ENCODE measurements at regions of chr11 and their contacts with region 1.

Region 1: DNA sequence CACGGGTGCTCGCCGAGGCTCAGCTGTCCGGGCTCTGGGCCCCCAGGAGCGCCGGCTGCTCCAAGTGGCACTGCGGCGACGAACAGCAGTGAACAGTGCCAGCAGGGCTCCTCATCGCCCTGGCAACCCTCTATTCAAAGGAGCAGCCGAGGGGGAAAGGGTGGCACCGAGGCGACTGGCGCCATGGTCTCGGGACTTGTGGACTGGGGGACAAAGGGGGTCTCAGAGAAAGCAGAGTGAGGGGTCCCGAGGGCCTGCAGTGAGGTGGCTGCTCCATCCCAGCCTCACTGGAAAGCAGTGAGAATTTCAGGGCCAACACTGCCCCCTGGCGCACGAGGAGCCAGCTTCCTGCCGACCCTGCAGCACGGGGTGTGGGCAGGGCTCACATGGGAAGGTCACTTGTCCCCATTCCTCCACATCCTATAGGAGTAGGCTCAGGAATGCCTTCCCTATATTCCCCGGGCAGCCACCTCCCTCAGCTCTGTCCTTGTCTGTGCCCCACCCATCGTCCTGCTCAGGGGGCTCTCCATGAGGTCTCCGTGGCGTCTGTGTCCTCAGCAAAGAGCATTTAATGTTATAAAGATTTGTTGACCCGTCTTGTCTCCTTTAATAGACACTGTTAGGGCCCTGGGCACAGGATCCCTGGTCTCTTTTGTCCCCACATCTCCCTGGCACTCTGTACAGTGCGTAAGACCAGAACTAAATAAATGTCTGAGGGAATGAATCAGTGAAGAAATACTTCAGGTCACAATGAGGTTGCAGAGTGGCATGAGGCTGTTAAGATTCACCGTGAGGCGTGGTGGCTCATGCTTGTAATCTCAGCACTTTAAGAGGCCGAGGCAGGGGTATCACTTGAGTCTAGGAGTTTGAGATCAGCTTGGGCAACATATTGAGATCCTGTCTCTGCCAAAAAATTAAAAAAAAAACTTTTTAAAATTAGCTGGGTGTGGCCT is 26.4 kb downstream of the LRFN4 start:
- DNase-seq: peak; percentile 70
- H3K4me3 ChIP-seq: peak overlapping the region in 1 of 2 donors; percentile 5
- H3K27ac ChIP-seq: peak overlapping the region; percentile 63 to 80
- H3K4me1 ChIP-seq: peaks cover 37% of the 10 kb centered on the region
- H3K27me3 ChIP-seq: no peaks in the 10 kb centered on the region
- CTCF ChIP-seq: peak; percentile 32 to 83 (median 66)
- POLR2A ChIP-seq: no peak

Region 2: DNA sequence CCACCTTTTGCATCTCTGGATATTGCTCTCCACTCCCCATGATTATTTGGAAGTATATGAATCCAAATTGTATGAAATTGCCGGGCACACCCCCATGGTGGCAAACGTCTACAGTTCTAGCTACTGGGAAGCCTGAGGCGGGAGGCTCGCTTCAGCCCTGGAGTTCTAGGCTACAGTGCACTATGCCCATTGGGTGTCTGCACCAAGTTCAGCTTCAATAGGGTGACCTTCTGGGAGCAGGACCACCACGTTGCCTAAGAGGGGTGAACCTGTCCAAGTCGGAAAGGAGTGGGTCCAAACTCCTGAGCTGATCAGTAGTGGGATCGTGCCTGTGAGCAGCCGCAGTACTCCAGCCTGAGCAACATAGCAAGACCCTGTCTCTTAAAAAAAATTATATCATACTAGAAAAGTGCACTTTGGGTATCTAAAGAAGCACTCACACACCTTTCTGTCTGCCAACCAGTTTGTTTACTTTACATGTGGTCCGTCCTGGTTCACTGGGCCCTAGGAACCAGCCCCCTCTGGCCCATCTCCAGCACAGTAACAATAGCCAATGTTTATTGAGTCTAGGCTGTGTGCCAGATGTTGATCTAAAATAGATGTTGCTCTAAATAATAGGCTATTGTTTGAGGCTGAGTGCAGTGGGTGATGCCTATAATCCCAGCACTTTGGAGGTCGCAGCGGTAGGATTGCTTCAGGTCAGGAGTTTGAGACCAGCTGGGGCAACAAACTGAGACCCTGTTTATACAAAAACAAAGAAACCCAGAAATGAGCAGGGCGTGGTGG is 1187.6 kb before region 1 on chr11:
- intact Hi-C with region 1: no loop called
- DNase-seq: peak; percentile 81
- H3K4me3 ChIP-seq: no peak overlapping the region
- H3K27ac ChIP-seq: no peak overlapping the region
- H3K4me1 ChIP-seq: peaks cover 7% of the 10 kb centered on the region
- H3K27me3 ChIP-seq: no peaks in the 10 kb centered on the region
- CTCF ChIP-seq: no peak
- POLR2A ChIP-seq: no peak

Region 3: GRCh38 chr11:66694732-66695207 is 188.5 kb before region 1 on chr11:
- intact Hi-C with region 1: loop called (anchors 2 kb)
- DNase-seq: peak; percentile 94
- H3K4me3 ChIP-seq: no peak overlapping the region
- H3K27ac ChIP-seq: peak overlapping the region; percentile 6 to 41
- H3K4me1 ChIP-seq: no peaks in the 10 kb centered on the region
- H3K27me3 ChIP-seq: no peaks in the 10 kb centered on the region
- CTCF ChIP-seq: peak; percentile 90 to 100 (median 98)
- POLR2A ChIP-seq: no peak

Region 4: GRCh38 chr11:66842896-66843775 is 40.2 kb before region 1 on chr11 and contains the start of gene RCE1:
- intact Hi-C with region 1: loop called (anchors 5 kb)
- DNase-seq: peak; percentile 85
- H3K4me3 ChIP-seq: peak within 1 kb of the TSS; percentile 92 to 99
- H3K27ac ChIP-seq: peak within 1 kb of the TSS; percentile 93 to 96
- H3K4me1 ChIP-seq: peaks cover 13% of the 10 kb centered on the region
- H3K27me3 ChIP-seq: no peaks in the 10 kb centered on the region
- CTCF ChIP-seq: peak in 1 of 4 experiments; percentile 12
- POLR2A ChIP-seq: peak; percentile 91
- total RNA-seq, gene RCE1: 27.1 to 50.0 TPM

Region 5: GRCh38 chr11:67195971-67196456 is 312.7 kb after region 1 on chr11:
- intact Hi-C with region 1: no loop called
- DNase-seq: no peak
- H3K4me3 ChIP-seq: no peak overlapping the region
- H3K27ac ChIP-seq: no peak overlapping the region
- H3K4me1 ChIP-seq: no peaks in the 10 kb centered on the region
- H3K27me3 ChIP-seq: no peaks in the 10 kb centered on the region
- CTCF ChIP-seq: no peak
- POLR2A ChIP-seq: no peak

Measured in prostate gland (tissue), 2 donors.